Adrenal gland (tissue), 19 donors: ENCODE measurements at regions of chr18 and their contacts with region 1.

Region 1: GRCh38 chr18:42114310-42114943 is 159.4 kb downstream of the PIK3C3 start:
- DNase-seq: peak; percentile 51 to 87 (median 68)
- H3K4me3 ChIP-seq: no peak overlapping the region
- H3K27ac ChIP-seq: no peak overlapping the region
- H3K4me1 ChIP-seq: peaks cover 5 to 12% of the 10 kb centered on the region in 2 donors
- H3K27me3 ChIP-seq: no peaks in the 10 kb centered on the region
- CTCF ChIP-seq: peak; percentile 75 to 97 (median 88)
- POLR2A ChIP-seq: no peak

Region 2: DNA sequence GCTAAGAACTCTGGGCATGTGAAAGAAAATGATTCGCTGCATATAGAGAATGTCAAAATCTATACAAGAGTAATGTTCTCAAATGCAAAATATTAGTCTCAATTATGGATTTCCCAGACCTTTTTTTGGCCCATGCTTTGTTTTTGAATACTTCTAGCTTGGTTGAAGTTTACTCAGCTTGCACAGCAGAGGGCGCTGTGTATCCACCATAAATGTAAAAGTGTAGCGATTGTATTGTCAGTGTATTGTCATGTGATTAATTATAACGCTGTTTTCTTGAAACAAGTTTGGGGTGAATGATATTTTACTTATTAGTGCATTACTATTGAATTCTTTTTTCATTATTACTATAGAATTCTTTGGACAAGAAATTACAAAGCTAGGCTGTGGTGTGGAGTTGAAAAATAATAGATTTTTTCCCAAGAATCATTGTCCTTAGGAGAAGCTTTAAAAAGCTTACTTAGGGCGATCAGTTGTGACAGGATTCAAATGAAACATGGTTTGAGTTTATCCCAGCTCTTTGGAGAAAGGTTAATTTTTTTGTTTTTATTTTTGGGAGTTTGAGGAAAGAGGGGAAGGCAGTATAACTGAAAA is 61.1 kb before region 1 on chr18:
- intact Hi-C with region 1: loop called in 1 of 2 experiments (anchors 10 kb)
- DNase-seq: peak; percentile 43 to 76 (median 64)
- H3K4me3 ChIP-seq: peak overlapping the region in 1 of 4 donors; percentile 40
- H3K27ac ChIP-seq: no peak overlapping the region
- H3K4me1 ChIP-seq: peaks cover 0 to 12% of the 10 kb centered on the region in 2 donors
- H3K27me3 ChIP-seq: no peaks in the 10 kb centered on the region
- CTCF ChIP-seq: peak; percentile 60 to 89 (median 76)
- POLR2A ChIP-seq: no peak

Region 3: DNA sequence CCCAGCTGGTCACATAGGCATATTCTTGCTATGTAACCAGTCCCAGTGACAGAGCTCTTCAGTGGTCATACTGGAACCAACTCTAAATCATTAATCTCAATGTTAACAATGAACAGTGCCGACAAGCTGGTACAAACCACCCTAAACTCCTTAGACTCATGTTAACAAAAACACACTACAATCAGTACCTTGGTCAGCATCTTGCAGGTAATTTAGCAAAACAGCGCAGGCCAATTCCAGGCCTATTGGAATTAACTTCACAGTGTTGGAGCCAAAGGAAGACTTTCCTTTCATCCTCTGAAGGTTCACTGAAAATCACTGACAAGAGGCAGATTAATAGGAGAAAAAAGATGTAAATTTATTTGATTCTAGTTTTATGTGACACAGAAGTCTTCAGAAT is 237.0 kb after region 1 on chr18:
- intact Hi-C with region 1: no loop called
- DNase-seq: no peak
- H3K4me3 ChIP-seq: no peak overlapping the region
- H3K27ac ChIP-seq: no peak overlapping the region
- H3K4me1 ChIP-seq: no peaks in the 10 kb centered on the region
- H3K27me3 ChIP-seq: no peaks in the 10 kb centered on the region
- CTCF ChIP-seq: no peak
- POLR2A ChIP-seq: no peak

Region 4: DNA sequence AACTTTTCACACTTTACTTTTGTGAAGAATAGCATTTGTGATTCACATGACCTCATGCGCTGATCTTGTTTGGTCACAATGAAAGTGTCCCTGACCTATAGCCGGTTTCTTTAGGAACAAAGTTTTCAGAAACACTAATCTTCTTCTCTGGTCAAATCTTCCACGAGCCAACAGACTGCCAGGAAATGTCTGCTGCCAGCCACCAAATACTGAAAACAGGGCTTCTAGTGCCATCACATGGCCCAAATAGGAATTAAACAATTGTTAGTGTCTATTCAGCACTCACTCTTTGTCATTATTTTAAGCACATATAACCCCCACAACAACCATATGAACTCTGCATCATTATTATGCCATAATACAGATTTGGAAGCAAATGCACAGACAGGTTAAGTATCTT is 1449.4 kb after region 1 on chr18:
- intact Hi-C with region 1: loop called in 1 of 2 experiments (anchors 10 kb)
- DNase-seq: peak; percentile 40 to 70 (median 56)
- H3K4me3 ChIP-seq: no peak overlapping the region
- H3K27ac ChIP-seq: no peak overlapping the region
- H3K4me1 ChIP-seq: no peaks in the 10 kb centered on the region
- H3K27me3 ChIP-seq: peaks cover 6% of the 10 kb centered on the region
- CTCF ChIP-seq: peak; percentile 8 to 69 (median 53)
- POLR2A ChIP-seq: no peak